ENCODE measurements at regions of chr4 and their contacts with region 1.

Region 1: DNA sequence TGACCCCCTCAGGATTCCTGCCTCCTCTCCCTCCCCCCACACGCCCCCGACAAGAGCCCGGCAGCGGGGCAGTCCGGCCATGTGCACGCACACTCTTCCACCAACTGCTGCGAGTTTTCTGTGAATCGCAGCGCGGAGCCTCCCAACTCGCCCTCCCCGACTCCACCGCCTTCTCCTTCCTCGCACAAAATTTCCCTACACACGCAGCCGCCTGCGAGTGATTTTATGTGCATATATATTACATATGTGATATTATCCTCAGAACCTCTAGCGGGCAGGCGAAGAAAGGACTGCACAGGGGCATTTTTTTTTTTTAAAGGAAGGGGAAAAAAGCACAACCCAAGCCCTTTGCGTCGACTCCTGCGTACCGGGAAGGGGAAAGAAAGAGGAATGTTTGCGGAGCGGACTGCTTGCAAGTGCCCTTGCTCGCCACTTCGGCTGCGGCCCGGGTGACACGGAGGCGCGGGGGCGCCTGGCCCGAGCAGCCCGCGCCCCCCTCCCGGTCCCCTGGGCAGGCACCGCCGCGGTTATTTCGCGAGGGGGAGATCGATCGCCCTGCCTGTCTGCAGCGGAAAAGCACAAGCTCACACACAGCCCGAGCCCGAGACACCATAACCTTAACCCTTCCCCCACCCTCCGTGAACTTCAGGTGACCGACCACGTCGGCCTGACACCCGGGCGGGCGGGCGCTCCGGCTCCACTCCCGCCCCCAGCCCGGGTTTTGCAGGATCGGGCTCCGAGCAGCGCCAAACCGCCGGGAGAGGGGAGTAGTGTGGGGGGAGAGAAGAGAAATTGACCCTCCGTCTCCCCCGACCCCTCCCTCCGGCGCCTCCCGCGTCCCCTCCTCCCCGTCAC is 2.3 kb downstream of the ZNF827 start:
- DNase-seq: peak in 1 of 2 donors; percentile 78
- H3K4me3 ChIP-seq: peak overlapping the region; percentile 73 to 82
- H3K27ac ChIP-seq: peak overlapping the region; percentile 95 to 99
- H3K4me1 ChIP-seq: peaks cover 0 to 18% of the 10 kb centered on the region in 2 donors
- H3K27me3 ChIP-seq: no peaks in the 10 kb centered on the region
- CTCF ChIP-seq: peak; percentile 7 to 23 (median 17)

Region 2: GRCh38 chr4:145481164-145481941 is 455.0 kb before region 1 on chr4 and contains the start of gene SMAD1:
- intact Hi-C with region 1: loop called (anchors 5 kb)
- DNase-seq: peak in 1 of 2 donors; percentile 89
- H3K4me3 ChIP-seq: peak within 1 kb of the TSS; percentile 96 to 99
- H3K27ac ChIP-seq: peak within 1 kb of the TSS; percentile 97
- H3K4me1 ChIP-seq: no peaks in the 10 kb centered on the region
- H3K27me3 ChIP-seq: no peaks in the 10 kb centered on the region
- CTCF ChIP-seq: no peak
- total RNA-seq, gene SMAD1: 20.1 TPM

Region 3: GRCh38 chr4:145644699-145645098 is 291.7 kb before region 1 on chr4:
- intact Hi-C with region 1: no loop called
- DNase-seq: no peak
- H3K4me3 ChIP-seq: no peak overlapping the region
- H3K27ac ChIP-seq: no peak overlapping the region
- H3K4me1 ChIP-seq: peaks cover 0 to 5% of the 10 kb centered on the region in 2 donors
- H3K27me3 ChIP-seq: no peaks in the 10 kb centered on the region
- CTCF ChIP-seq: no peak

Region 4: DNA sequence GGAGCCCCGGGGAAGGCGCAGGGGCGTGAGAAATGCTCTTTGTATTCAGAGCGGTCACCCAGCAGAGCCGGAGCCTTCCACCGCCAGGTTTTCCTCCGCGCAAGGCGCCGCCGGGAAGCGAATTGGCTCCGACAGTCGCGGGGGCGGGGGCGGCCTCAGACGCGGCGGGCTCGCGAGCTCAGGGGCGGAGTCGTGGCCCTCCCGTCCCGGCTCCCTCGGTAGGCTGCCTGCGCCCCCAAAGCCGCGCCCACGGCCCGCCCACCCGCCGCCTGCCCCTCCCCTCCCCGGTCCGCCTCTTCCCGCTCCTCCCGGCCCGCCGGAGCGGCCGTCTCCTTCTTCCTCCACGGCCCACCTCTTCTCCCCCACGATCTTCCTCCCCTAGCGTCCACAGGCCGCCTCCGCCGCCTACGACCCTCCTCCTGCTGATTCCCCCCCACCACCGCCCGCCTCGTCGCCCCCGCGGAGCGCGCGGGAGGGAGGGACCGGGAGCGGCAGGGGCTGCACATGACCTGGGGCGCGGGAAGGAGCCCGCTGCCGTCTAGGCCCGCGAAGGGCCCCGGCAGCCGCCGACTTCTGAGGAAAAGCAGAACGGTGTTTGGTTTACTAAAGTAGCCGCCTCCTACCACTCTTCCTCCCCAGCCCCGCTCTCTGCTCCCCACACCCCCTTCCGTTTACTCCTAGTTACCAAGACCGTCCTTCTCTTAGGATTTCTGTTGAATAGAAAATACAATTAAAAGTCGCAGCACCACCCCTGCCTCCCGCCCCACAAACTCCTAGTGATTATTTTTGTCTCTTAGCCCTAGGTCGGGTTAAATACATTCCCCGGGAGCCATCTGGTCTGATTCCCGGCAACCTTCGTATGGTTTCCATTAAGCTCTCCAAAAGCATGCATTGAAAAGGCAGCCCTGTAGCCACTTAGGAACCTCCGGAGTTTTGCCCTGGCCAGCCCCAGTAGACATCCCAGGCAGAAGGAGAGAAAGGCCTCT is 203.2 kb before region 1 on chr4:
- intact Hi-C with region 1: loop called (anchors 1 kb)
- DNase-seq: peak; percentile 75 to 98
- H3K4me3 ChIP-seq: peak overlapping the region; percentile 74 to 77
- H3K27ac ChIP-seq: peak overlapping the region; percentile 99
- H3K4me1 ChIP-seq: peaks cover 13 to 32% of the 10 kb centered on the region in 2 donors
- H3K27me3 ChIP-seq: no peaks in the 10 kb centered on the region
- CTCF ChIP-seq: peak in 1 of 3 experiments; percentile 5

Region 5: DNA sequence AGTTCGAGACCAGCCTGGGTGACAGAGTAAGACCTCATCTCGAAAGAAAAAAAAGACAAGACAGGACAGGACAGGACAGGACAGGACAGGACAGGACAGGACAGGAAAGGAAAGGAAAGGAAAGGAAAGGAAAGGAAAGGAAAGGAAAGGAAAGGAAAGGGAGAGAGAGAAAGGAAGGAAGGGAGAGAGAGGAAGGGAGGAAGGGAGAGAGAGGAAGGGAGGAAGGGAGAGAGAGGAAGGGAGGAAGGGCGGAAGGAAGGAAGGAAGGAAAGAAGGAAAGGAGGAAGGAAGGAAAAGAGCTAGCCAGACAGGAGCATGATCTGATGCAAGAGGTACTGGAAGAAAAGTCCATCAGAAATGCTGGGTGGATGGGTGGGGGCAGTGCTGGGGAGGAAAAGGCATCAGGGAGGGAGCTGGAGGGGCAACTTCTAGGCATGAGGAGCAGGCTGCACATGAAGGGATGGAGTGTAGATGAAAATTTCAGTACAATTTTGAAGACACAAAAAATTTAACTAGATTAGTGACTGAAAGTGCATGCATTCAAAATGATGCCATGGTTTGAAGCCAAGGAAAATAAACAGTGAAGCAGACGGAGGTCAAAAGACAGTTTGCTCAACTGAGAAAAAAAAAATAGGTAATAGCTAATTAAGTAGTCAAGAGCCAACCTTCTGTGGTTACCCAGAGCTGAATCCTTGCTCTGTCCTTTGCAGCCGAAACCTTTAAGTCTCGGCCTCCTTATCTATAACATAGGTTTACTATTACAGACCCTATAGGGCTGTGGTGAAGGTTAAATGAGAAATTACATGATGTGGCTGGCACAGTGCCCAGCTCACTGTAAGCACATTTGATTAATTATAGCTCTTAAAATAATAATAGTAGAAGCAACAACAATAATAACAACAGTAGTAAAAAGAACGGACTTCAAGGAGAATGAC is 57.6 kb before region 1 on chr4:
- intact Hi-C with region 1: loop called (anchors 2 kb)
- DNase-seq: no peak
- H3K4me3 ChIP-seq: no peak overlapping the region
- H3K27ac ChIP-seq: peak overlapping the region; percentile 53 to 65
- H3K4me1 ChIP-seq: peaks cover 3 to 22% of the 10 kb centered on the region in 2 donors
- H3K27me3 ChIP-seq: no peaks in the 10 kb centered on the region
- CTCF ChIP-seq: no peak

Region 6: DNA sequence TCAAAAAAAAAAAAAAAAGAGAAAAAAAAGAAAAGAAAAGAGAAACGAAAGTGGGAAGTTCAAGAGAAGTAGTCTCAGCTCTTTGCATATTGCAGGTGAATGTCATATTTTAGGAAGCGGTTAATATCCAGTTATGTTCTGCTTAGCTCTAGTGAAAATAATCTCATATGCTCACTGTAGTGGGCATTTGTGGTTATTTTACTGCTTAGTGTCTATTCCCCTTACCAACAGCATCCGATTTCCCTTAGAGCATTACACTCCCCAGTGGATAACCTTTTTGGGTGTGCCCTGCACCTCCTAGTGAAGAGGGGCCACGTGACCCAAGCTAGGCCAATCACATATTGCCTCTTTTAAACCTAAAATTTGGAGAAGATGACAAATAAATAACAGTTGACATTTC is 113.4 kb after region 1 on chr4:
- intact Hi-C with region 1: loop called (anchors 5 kb)
- DNase-seq: no peak
- H3K4me3 ChIP-seq: no peak overlapping the region
- H3K27ac ChIP-seq: no peak overlapping the region
- H3K4me1 ChIP-seq: peaks cover 0 to 8% of the 10 kb centered on the region in 2 donors
- H3K27me3 ChIP-seq: no peaks in the 10 kb centered on the region
- CTCF ChIP-seq: no peak

Region 7: DNA sequence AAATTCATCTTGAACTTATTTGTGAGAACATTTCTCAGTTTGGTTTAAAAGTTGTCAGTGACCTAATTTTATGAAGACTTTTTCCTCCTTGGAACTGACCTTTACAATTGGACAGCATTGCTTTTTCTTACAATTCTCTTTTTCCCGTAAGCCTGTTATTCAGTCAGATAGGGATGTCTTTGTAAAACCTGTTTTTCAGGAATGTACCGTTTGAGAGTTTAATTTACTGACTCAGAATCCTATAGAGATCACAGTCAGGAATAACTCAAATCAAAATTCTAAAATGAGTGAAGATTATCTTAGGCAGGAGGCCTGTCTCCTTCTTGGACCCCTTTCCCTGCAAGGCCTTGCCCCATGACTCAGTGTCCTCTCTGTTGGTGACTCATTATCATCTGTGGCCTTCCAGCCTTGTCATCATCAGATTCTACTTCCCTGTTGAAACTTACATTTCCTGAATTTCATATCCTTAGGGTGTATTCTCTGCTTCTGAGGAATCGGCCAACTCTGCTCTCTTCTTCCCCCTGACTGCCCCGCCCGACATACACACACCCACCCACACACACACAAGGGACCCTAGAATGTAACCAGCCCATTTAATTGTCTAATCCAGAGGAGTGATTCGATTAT is 1895.3 kb after region 1 on chr4:
- intact Hi-C with region 1: loop called (anchors 10 kb)
- DNase-seq: peak; percentile 37 to 82
- H3K4me3 ChIP-seq: no peak overlapping the region
- H3K27ac ChIP-seq: peak overlapping the region; percentile 86 to 94
- H3K4me1 ChIP-seq: peaks cover 22 to 74% of the 10 kb centered on the region in 2 donors
- H3K27me3 ChIP-seq: no peaks in the 10 kb centered on the region
- CTCF ChIP-seq: no peak